Naive thymus-derived CD4-positive, alpha-beta T cell (primary cell): ENCODE measurements at regions of chr9 and their contacts with region 1.

Region 1: DNA sequence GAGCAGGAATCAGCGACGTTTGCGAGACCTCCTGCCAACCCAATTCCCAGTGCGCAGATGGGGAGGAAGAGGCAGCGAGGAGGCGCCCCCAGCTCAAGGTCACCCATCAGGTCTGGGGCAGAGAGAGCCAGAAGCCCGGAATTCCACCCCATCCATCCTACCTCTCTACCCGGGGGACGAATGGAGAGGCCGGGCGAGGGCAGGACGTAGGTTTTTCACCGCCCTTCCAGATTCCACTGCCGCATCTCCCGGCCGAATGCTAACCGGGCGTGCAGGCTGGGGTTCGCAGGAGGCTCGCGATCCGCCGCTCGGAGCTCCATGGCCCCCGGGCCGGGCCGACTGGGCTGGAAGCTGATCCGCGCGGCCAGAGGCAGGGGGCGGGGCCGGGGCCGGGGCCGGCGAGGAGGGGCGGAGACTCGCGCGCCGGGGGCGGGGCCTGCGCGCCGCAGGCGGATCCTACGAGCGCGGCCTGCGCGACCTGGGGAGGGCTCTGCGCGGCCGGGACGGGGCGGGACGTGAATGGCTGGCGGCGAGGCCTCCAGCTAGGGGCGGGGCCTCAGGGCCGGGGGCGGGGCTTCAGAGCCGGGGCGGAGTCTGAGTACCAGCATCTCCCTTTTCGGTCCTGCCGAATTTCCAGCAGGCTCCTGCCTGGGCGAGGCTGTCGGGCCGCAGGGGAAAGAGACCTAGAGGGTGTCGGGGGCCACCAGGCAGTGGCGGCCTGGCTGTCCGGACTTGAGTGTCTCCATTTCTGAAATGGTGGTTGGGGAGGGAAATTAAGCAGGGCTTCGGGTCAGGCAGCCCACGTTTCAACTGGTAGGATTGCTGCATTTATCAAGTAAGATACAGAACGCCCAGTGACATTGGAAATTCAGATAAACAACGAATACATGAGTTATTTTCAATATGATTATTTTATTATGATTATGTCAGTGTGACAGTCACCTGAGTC is at the start of gene ST6GALNAC4:
- DNase-seq: peak; percentile 82 to 97 (median 89)
- ATAC-seq: peak; percentile 98
- H3K4me3 ChIP-seq: peak within 1 kb of the TSS; percentile 86
- H3K4me3 Mint-ChIP-seq: peak within 1 kb of the TSS; percentile 76 to 91 (median 86)
- H3K27ac ChIP-seq: peak within 1 kb of the TSS; percentile 81
- H3K27ac Mint-ChIP-seq: peak within 1 kb of the TSS; percentile 69 to 95 (median 87)
- H3K4me1 ChIP-seq: peaks cover 28 to 39% of the 10 kb centered on the region in 2 donors
- H3K4me1 Mint-ChIP-seq: peaks cover 29 to 64% (median 51%) of the 10 kb centered on the region in 7 donors
- H3K27me3 ChIP-seq: no peaks in the 10 kb centered on the region
- H3K27me3 Mint-ChIP-seq: peaks cover 0 to under 1% (median 0%) of the 10 kb centered on the region in 5 donors
- total RNA-seq, gene ST6GALNAC4: 28.0 to 51.0 (median 36.1) TPM

Region 2: GRCh38 chr9:127224178-127224882 is 692.6 kb before region 1 on chr9:
- CTCF ChIA-PET with region 1: interaction called, 3 read pairs
- POLR2A ChIA-PET with region 1: no interaction called
- intact Hi-C with region 1: loop called in 1 of 2 experiments (anchors 2 kb)
- DNase-seq: peak; percentile 81 to 90 (median 85)
- ATAC-seq: peak; percentile 82
- H3K4me3 ChIP-seq: peak overlapping the region; percentile 51
- H3K4me3 Mint-ChIP-seq: peak overlapping the region; percentile 74 to 93 (median 85)
- H3K27ac ChIP-seq: no peak overlapping the region
- H3K27ac Mint-ChIP-seq: peak overlapping the region; percentile 8 to 94 (median 82)
- H3K4me1 ChIP-seq: peaks cover 10 to 31% of the 10 kb centered on the region in 2 donors
- H3K4me1 Mint-ChIP-seq: peaks cover 24 to 49% (median 41%) of the 10 kb centered on the region in 7 donors
- H3K27me3 ChIP-seq: no peaks in the 10 kb centered on the region
- H3K27me3 Mint-ChIP-seq: peaks cover 0 to 58% (median 12%) of the 10 kb centered on the region in 5 donors

Region 3: GRCh38 chr9:127586537-127586936 is 330.4 kb before region 1 on chr9:
- CTCF ChIA-PET with region 1: interaction called, 36 read pairs
- POLR2A ChIA-PET with region 1: no interaction called
- intact Hi-C with region 1: loop called (anchors 1 kb)
- DNase-seq: peak; percentile 24 to 60 (median 53)
- ATAC-seq: peak; percentile 79
- H3K4me3 ChIP-seq: no peak overlapping the region
- H3K4me3 Mint-ChIP-seq: no peak overlapping the region
- H3K27ac ChIP-seq: no peak overlapping the region
- H3K27ac Mint-ChIP-seq: peak overlapping the region in 1 of 9 donors; percentile 56
- H3K4me1 ChIP-seq: no peaks in the 10 kb centered on the region
- H3K4me1 Mint-ChIP-seq: peaks cover 0 to 16% (median 0%) of the 10 kb centered on the region in 7 donors
- H3K27me3 ChIP-seq: no peaks in the 10 kb centered on the region
- H3K27me3 Mint-ChIP-seq: peaks cover 0 to 22% (median 5%) of the 10 kb centered on the region in 5 donors

Region 4: GRCh38 chr9:127802576-127803443 is 114.1 kb before region 1 on chr9 and contains the start of gene FPGS:
- CTCF ChIA-PET with region 1: interaction called, 3 read pairs
- POLR2A ChIA-PET with region 1: interaction called, 3 read pairs
- intact Hi-C with region 1: loop called (anchors 1 to 2 kb)
- DNase-seq: peak; percentile 77 to 86 (median 85)
- ATAC-seq: peak; percentile 94
- H3K4me3 ChIP-seq: peak within 1 kb of the TSS; percentile 81
- H3K4me3 Mint-ChIP-seq: peak within 1 kb of the TSS; percentile 81 to 95 (median 90)
- H3K27ac ChIP-seq: peak within 1 kb of the TSS; percentile 93
- H3K27ac Mint-ChIP-seq: peak within 1 kb of the TSS; percentile 80 to 95 (median 89)
- H3K4me1 ChIP-seq: peaks cover 12 to 19% of the 10 kb centered on the region in 2 donors
- H3K4me1 Mint-ChIP-seq: peaks cover 4 to 31% (median 20%) of the 10 kb centered on the region in 7 donors
- H3K27me3 ChIP-seq: no peaks in the 10 kb centered on the region
- H3K27me3 Mint-ChIP-seq: no peaks in the 10 kb centered on the region
- total RNA-seq, gene FPGS: 90.4 to 123 (median 95.4) TPM

Region 5: DNA sequence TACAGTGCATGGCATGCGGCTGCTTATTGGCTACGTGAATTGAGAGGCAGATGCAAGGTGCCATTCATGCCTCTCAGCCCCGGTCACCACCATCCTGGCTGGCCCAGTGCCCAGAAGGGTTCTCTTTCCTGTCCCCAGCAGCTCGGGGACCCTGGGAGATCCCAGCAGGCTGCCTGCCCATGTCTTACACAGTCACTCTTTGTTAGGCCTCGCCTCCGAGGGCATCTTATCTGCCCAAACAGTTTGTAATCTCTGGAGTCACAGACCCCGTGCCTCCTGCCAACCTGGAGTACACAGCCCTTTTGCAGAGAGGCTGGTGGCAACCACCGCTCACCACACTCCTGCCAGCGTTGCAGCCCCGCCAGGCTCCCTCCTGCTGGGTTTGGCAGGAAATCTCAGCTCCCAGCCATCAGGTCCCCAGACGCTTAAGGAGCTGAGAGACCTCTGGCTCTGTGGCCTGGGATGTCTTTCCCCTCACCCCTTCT is 32.5 kb before region 1 on chr9:
- CTCF ChIA-PET with region 1: interaction called, 12 read pairs
- POLR2A ChIA-PET with region 1: interaction called, 7 read pairs
- intact Hi-C with region 1: loop called in 1 of 2 experiments (anchors 5 kb)
- DNase-seq: peak in 1 of 9 donors; percentile 1
- ATAC-seq: peak; percentile 38
- H3K4me3 ChIP-seq: no peak overlapping the region
- H3K4me3 Mint-ChIP-seq: peak overlapping the region in 1 of 10 donors; percentile 22
- H3K27ac ChIP-seq: no peak overlapping the region
- H3K27ac Mint-ChIP-seq: peak overlapping the region in 5 of 9 donors; percentile 40 to 81 (median 52)
- H3K4me1 ChIP-seq: no peaks in the 10 kb centered on the region
- H3K4me1 Mint-ChIP-seq: peaks cover 0 to 19% (median 14%) of the 10 kb centered on the region in 7 donors
- H3K27me3 ChIP-seq: no peaks in the 10 kb centered on the region
- H3K27me3 Mint-ChIP-seq: no peaks in the 10 kb centered on the region

Region 6: GRCh38 chr9:127930231-127931091 is 13.5 kb after region 1 on chr9 and contains the start of gene PIP5KL1:
- CTCF ChIA-PET with region 1: interaction called, 3 read pairs
- POLR2A ChIA-PET with region 1: interaction called, 5 read pairs
- intact Hi-C with region 1: loop called (anchors 1 kb)
- DNase-seq: peak; percentile 48 to 86 (median 70)
- ATAC-seq: peak; percentile 82
- H3K4me3 ChIP-seq: peak within 1 kb of the TSS; percentile 70
- H3K4me3 Mint-ChIP-seq: peak within 1 kb of the TSS; percentile 66 to 85 (median 78)
- H3K27ac ChIP-seq: peak within 1 kb of the TSS; percentile 6
- H3K27ac Mint-ChIP-seq: peak within 1 kb of the TSS; percentile 51 to 93 (median 76)
- H3K4me1 ChIP-seq: peaks cover 21 to 30% of the 10 kb centered on the region in 2 donors
- H3K4me1 Mint-ChIP-seq: peaks cover 17 to 48% (median 43%) of the 10 kb centered on the region in 7 donors
- H3K27me3 ChIP-seq: no peaks in the 10 kb centered on the region
- H3K27me3 Mint-ChIP-seq: peaks cover 0 to 23% (median 0%) of the 10 kb centered on the region in 5 donors
- total RNA-seq, gene PIP5KL1: 1.4 to 2.9 (median 2.1) TPM

Region 7: DNA sequence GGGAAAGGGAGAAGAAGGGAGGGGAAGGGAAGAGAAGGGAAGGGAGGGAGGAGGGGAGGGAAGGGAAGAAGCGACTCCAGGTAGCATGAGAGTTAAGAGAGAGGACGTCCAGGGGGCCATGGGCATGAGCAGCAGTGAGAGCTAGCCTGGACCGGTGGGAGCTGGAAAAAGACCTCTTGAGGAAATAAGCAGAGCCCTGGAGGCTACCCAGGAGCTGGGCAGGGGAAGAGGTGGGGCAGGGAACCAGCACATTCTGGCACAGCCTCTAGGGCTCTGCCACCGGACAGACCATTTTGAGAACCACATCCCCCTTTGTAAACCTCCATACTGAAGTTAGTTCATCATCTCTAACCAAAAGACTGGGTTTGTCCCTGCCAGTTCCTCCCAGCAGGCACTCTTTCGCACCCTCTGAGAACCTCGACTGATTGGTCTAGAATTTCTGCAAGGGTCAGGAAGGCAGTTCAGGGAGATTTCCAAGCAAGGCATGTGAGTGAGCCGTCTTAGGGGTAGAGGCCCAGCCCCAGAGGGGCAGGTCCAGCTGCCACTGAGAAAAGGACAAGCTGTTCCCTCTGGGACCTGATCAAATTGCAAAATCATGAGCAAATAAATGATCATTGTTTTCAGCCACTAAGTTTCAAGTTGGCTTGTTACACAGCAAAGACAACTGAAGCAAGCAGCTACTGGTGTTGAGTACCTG is 138.6 kb after region 1 on chr9:
- CTCF ChIA-PET with region 1: no interaction called
- POLR2A ChIA-PET with region 1: no interaction called
- intact Hi-C with region 1: no loop called
- DNase-seq: no peak
- ATAC-seq: no peak
- H3K4me3 ChIP-seq: no peak overlapping the region
- H3K4me3 Mint-ChIP-seq: no peak overlapping the region
- H3K27ac ChIP-seq: no peak overlapping the region
- H3K27ac Mint-ChIP-seq: no peak overlapping the region
- H3K4me1 ChIP-seq: peaks cover 0 to 1% of the 10 kb centered on the region in 2 donors
- H3K4me1 Mint-ChIP-seq: peaks cover 0 to 8% (median 0%) of the 10 kb centered on the region in 7 donors
- H3K27me3 ChIP-seq: no peaks in the 10 kb centered on the region
- H3K27me3 Mint-ChIP-seq: peaks cover 0 to 7% (median 0%) of the 10 kb centered on the region in 5 donors

Region 8: GRCh38 chr9:128175102-128175563 is 258.2 kb after region 1 on chr9:
- CTCF ChIA-PET with region 1: no interaction called
- POLR2A ChIA-PET with region 1: no interaction called
- intact Hi-C with region 1: no loop called
- DNase-seq: no peak
- ATAC-seq: no peak
- H3K4me3 ChIP-seq: no peak overlapping the region
- H3K4me3 Mint-ChIP-seq: no peak overlapping the region
- H3K27ac ChIP-seq: no peak overlapping the region
- H3K27ac Mint-ChIP-seq: peak overlapping the region in 1 of 9 donors; percentile 63
- H3K4me1 ChIP-seq: no peaks in the 10 kb centered on the region
- H3K4me1 Mint-ChIP-seq: no peaks in the 10 kb centered on the region
- H3K27me3 ChIP-seq: no peaks in the 10 kb centered on the region
- H3K27me3 Mint-ChIP-seq: no peaks in the 10 kb centered on the region